IMR-90 (cell line): ENCODE measurements at regions of chr16 and their contacts with region 1.

Region 1: DNA sequence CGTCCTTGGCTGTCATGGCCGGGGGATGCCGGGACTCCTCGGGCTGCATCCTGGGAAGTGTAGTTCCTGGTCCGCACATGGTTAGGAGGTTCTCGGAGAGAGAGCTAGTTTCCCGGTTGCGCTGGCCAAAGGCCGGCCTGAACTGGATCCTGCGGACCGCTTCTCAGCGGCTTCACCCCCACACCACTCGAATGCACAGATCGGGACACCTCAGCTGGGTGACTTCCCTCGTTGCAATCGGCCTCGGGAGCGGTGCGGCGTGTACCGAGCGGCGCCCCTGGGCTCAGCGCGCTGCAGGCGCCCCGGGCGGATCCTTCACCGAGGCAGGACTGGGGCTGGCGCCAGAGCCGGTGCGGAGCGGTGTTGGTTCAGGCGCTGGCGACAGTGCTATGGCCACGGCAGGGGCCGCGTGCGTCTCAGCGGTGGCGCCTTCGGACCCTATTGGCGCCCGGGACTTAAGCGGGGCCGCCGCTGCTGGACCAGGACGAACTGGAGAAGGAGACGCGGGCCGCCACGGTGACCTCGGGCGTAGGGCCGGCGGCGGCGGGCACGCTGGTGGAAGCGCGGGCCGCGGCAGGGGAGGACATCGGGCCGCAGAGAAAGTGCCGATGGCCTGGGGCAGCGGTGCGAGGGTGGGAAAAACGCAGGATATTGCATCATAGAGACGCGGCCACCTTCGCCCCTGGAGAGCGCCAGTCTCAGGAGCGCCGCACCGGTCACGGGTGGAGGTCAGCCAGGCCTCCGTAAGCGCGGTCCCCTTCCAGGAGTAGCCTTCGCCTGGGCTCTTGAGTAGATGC is 11.4 kb downstream of the ZNF629 start:
- DNase-seq: peak; percentile 76
- ATAC-seq: peak; percentile 83
- H3K4me3 ChIP-seq: peak overlapping the region; percentile 68
- H3K27ac ChIP-seq: peak overlapping the region; percentile 79
- H3K4me1 ChIP-seq: peaks cover 13% of the 10 kb centered on the region
- H3K27me3 ChIP-seq: no peaks in the 10 kb centered on the region
- CTCF ChIP-seq: no peak
- POLR2A ChIP-seq: no peak
- RAD21 ChIP-seq: no peak

Region 2: DNA sequence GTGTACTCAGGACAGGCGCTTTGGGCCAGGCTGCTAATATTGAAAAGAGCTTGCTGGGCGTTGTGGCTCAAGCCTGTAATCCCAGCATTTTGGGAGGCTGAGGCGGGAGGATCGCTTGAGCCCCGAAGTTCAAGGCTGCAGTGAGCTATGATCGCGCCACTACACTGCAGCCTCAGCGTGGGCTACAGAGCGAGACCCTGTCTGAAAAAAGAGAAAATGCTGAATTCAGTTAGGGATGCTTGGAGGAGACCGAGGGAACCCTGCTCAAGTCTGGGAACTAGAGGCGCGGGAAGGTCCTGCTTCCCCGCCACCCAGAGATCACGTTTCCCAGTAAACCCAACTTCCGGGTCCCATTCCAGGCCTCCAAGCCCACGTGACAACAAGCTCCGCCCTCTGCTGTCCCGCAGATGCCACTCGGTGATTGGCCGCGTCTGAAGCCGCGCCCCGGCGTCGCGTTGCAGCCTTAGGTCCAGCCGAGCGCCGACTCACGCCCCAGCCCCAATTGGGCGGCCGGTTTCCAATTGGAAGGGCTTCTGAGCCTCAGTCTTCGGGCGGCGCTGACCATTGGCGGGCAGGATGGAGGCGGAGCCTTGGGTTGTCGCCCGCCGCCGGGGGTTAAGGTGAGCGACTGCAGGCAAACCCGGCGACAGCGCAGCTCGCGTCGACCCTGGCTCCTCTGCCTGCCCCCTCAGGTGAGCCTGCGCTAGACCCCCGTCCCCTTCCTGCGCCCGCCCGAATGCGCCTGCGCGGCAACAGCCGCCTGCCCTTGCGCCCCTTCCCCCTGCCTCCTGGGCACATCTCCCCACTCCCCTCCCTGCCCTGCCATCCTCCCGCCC is 27.6 kb before region 1 on chr16 and contains the start of gene PHKG2:
- CTCF ChIA-PET with region 1: no interaction called
- POLR2A ChIA-PET with region 1: no interaction called
- dilution Hi-C with region 1: no loop called
- in situ Hi-C with region 1: no loop called
- intact Hi-C with region 1: loop called (anchors 1 kb)
- DNase-seq: peak; percentile 98
- ATAC-seq: peak; percentile 99
- H3K4me3 ChIP-seq: peak within 1 kb of the TSS; percentile 81
- H3K27ac ChIP-seq: peak within 1 kb of the TSS; percentile 89
- H3K4me1 ChIP-seq: no peaks in the 10 kb centered on the region
- H3K27me3 ChIP-seq: no peaks in the 10 kb centered on the region
- CTCF ChIP-seq: no peak
- POLR2A ChIP-seq: peak; percentile 66
- RAD21 ChIP-seq: no peak
- total RNA-seq, gene PHKG2: 26.0 and 26.7 TPM in 2 replicates